Activated CD4-positive, alpha-beta memory T cell treated with anti-CD3 and anti-CD28 coated beads for 36 hours (primary cell): ENCODE measurements at regions of chr4 and their contacts with region 1.

Region 1: DNA sequence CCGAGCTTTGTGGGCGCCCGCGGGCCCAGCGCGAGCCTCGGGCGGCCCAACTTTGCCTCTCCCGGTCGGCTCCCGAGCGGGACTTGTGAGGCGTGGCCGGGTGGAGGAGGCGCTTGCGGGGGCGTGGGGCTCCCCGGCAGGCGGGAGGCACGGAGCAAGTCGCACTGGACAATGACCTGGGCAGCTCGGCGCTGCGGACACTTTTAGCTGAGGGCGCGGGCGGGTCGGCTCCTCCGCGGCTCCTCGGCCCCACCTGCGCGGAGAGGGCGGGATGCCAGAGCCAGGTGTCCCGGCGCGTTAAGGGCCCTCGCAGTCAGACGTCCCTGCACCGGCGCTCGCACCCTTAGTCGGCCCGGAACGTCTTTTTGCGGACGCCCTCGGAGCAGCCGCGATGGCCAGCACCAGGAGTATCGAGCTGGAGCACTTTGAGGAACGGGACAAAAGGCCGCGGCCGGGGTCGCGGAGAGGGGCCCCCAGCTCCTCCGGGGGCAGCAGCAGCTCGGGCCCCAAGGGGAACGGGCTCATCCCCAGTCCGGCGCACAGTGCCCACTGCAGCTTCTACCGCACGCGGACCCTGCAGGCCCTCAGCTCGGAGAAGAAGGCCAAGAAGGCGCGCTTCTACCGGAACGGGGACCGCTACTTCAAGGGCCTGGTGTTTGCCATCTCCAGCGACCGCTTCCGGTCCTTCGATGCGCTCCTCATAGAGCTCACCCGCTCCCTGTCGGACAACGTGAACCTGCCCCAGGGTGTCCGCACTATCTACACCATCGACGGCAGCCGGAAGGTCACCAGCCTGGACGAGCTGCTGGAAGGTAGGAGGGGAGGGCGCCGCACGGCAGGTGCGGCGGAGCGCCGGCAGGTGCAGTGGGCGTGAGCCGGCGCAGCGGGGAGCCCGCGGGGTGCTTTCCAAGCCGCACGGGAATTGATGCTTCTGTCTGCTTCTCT is 664 bp downstream of the DCLK2 start:
- DNase-seq: peak; percentile 33
- H3K4me3 Mint-ChIP-seq: peak overlapping the region; percentile 52
- H3K27ac Mint-ChIP-seq: no peak overlapping the region
- H3K4me1 Mint-ChIP-seq: peaks cover 5% of the 10 kb centered on the region
- H3K27me3 Mint-ChIP-seq: peaks cover 42% of the 10 kb centered on the region

Region 2: GRCh38 chr4:149987330-149988086 is 91.4 kb before region 1 on chr4:
- CTCF ChIA-PET with region 1: no interaction called
- POLR2A ChIA-PET with region 1: no interaction called
- intact Hi-C with region 1: loop called (anchors 1 kb)
- DNase-seq: no peak
- H3K4me3 Mint-ChIP-seq: no peak overlapping the region
- H3K27ac Mint-ChIP-seq: no peak overlapping the region
- H3K4me1 Mint-ChIP-seq: peaks cover 27% of the 10 kb centered on the region
- H3K27me3 Mint-ChIP-seq: no peaks in the 10 kb centered on the region

Region 3: GRCh38 chr4:150140774-150141400 is 62.0 kb after region 1 on chr4:
- CTCF ChIA-PET with region 1: no interaction called
- POLR2A ChIA-PET with region 1: no interaction called
- intact Hi-C with region 1: loop called (anchors 5 kb)
- DNase-seq: no peak
- H3K4me3 Mint-ChIP-seq: no peak overlapping the region
- H3K27ac Mint-ChIP-seq: no peak overlapping the region
- H3K4me1 Mint-ChIP-seq: peaks cover 8% of the 10 kb centered on the region
- H3K27me3 Mint-ChIP-seq: no peaks in the 10 kb centered on the region